ENCODE measurements at regions of chr5 and their contacts with region 1.

Region 1: GRCh38 chr5:60699530-60700382 is at the start of gene DEPDC1B:
- H3K4me3 ChIP-seq: peak within 1 kb of the TSS; percentile 86
- H3K27ac ChIP-seq: peak within 1 kb of the TSS; percentile 88
- H3K4me1 ChIP-seq: peaks cover 6% of the 10 kb centered on the region
- CTCF ChIP-seq: peak; percentile 76

Region 2: DNA sequence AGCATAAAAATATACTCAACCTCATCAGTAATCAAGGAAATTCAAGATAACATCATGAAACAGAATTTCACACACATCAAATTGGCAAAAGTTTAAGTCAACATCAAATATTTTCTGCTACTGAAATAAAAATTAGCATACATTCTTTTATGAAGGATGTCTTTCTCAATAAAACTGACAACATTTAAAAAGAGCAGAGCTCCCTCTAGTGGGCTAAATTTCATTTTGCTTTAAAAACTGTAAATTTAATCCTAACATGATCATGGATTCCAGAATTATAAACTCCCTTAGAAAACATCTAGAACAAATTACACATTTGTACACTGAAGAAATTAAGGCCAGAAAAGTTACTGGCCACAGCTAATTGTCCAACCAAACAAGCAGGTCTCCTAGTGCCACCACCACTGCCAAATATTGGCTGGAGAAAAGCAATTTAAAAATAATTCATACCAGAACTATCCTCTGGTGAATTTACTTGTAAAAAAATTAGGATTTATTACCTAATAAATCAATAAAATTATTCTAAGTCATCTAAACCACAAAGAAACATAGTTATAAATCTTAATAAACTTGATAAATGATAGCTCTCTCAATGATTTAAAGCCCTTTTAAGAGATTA is 31.0 kb before region 1 on chr5:
- CTCF ChIA-PET with region 1: interaction called, 10 read pairs
- POLR2A ChIA-PET with region 1: interaction called, 3 read pairs
- H3K4me3 ChIP-seq: no peak overlapping the region
- H3K27ac ChIP-seq: no peak overlapping the region
- H3K4me1 ChIP-seq: no peaks in the 10 kb centered on the region
- CTCF ChIP-seq: no peak

Region 3: GRCh38 chr5:60687927-60688720 is 11.6 kb before region 1 on chr5:
- CTCF ChIA-PET with region 1: interaction called, 32 read pairs
- POLR2A ChIA-PET with region 1: interaction called, 8 read pairs
- H3K4me3 ChIP-seq: no peak overlapping the region
- H3K27ac ChIP-seq: no peak overlapping the region
- H3K4me1 ChIP-seq: no peaks in the 10 kb centered on the region; the same call in 1 of the 2 replicates
- CTCF ChIP-seq: no peak

Region 4: DNA sequence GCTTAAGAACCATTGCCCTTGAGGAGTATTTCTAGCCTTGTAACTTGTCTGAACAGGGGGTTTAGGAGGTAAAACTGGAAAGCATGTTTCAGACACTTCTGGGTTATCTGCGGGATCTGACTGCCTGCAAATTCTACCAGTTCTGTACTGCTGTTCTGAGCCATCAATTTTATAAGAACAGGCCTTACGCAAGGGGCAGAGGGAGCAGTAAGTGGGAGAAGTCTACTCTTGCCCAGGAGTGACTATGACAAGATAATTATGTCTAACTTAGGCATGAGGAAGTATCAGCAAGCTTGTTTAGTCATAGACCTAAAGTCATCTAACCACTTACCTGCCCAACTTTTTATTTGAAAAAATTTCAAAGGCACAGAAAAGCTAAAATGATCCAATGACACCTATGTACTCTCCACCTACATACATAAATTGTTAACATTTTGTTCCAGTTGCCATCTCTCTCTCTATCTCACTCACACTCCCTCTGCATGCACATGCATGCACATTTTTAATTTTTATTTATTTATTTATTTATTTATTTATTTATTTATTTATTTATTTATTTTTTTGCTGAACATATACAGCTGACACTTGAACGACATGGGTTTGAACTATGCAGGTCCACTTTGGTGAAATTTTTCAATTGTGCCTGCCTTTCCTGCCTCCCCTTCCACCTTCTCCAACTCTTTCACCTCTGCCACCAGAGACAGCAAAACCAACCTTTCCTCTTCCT is 18.6 kb after region 1 on chr5:
- CTCF ChIA-PET with region 1: no interaction called
- POLR2A ChIA-PET with region 1: no interaction called
- H3K4me3 ChIP-seq: no peak overlapping the region
- H3K27ac ChIP-seq: no peak overlapping the region
- H3K4me1 ChIP-seq: no peaks in the 10 kb centered on the region
- CTCF ChIP-seq: no peak

Region 5: GRCh38 chr5:60843936-60844905 is 144.5 kb after region 1 on chr5 and contains the start of gene ELOVL7:
- CTCF ChIA-PET with region 1: interaction called, 7 read pairs
- POLR2A ChIA-PET with region 1: interaction called, 13 read pairs
- H3K4me3 ChIP-seq: peak within 1 kb of the TSS; percentile 89
- H3K27ac ChIP-seq: peak within 1 kb of the TSS; percentile 61; the same call in 1 of the 2 replicates
- H3K4me1 ChIP-seq: no peaks in the 10 kb centered on the region; the same call in 1 of the 2 replicates
- CTCF ChIP-seq: peak; percentile 73

Region 6: DNA sequence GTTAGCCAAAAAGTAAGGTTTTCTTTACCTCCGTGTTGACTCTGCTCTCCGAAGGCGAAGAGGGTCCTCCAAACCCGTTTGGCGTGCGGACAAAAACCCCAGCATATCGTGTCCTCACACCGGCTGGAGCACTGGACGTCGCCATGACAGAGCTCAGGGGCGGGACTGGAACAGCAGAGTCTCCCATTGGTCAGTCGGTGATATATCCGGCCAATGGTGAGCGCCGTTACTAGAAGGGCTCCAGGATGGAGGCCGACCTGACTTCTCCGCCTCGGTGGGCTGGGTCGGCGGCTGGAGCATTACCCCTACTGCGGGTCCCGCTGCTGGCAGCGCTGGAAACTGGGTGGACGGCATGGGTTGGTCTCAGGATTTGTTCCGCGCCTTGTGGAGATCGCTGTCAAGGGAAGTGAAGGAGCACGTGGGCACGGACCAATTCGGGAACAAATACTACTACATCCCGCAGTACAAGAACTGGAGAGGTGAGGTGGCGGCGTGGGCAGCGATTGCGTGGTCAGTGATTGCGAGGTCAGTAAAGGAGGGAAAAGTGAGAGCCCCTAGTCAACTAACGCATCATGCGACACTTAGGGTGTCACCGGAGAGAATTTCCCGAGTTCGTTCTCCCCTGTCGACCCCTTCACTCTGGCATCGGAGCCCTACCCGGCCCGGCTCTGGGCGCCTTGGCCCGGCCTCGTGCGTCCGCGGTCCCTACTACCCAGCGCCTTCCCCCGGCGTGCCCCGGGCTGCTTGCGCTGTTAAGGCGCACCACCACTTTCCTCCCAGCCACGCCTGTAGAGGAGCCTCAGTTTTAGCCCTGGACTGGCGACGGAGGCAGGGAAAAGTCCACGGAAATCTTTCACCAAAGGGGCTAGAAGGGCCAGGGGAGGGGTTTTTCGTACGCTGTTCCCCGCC is 245.4 kb after region 1 on chr5 and contains the starts of genes ERCC8 and NDUFAF2:
- CTCF ChIA-PET with region 1: no interaction called
- POLR2A ChIA-PET with region 1: interaction called, 11 read pairs
- H3K4me3 ChIP-seq: peak within 1 kb of the TSS; percentile 67
- H3K27ac ChIP-seq: peak within 1 kb of the TSS; percentile 51; the same call in 1 of the 2 replicates
- H3K4me1 ChIP-seq: no peaks in the 10 kb centered on the region
- CTCF ChIP-seq: 0 out of 2 replicates have a peak, but pooled peaks have one; percentile 33

Region 7: DNA sequence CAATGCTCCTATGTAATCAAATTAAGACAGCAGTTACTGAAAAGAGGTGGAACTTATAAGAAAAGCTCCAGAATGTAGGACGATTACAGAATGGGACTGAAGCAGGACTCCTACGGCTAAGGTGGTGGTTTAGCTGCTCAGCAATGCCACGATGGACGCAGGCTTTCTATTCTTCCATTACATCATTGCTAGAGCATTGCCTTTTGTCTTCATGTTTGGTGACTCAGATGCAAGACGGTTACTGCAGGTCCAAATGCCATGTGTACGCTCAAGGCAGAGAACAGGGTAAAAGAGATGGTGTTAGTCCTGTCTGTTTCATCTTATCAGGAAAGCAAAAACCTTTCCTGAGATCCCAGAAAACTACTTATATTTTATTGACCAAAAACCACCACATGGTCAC is 887.4 kb after region 1 on chr5:
- CTCF ChIA-PET with region 1: no interaction called
- POLR2A ChIA-PET with region 1: no interaction called
- H3K4me3 ChIP-seq: no peak overlapping the region
- H3K27ac ChIP-seq: no peak overlapping the region
- H3K4me1 ChIP-seq: no peaks in the 10 kb centered on the region
- CTCF ChIP-seq: no peak